Sciatic nerve (tissue), 2 donors: ENCODE measurements at regions of chr10 and their contacts with region 1.

Region 1: DNA sequence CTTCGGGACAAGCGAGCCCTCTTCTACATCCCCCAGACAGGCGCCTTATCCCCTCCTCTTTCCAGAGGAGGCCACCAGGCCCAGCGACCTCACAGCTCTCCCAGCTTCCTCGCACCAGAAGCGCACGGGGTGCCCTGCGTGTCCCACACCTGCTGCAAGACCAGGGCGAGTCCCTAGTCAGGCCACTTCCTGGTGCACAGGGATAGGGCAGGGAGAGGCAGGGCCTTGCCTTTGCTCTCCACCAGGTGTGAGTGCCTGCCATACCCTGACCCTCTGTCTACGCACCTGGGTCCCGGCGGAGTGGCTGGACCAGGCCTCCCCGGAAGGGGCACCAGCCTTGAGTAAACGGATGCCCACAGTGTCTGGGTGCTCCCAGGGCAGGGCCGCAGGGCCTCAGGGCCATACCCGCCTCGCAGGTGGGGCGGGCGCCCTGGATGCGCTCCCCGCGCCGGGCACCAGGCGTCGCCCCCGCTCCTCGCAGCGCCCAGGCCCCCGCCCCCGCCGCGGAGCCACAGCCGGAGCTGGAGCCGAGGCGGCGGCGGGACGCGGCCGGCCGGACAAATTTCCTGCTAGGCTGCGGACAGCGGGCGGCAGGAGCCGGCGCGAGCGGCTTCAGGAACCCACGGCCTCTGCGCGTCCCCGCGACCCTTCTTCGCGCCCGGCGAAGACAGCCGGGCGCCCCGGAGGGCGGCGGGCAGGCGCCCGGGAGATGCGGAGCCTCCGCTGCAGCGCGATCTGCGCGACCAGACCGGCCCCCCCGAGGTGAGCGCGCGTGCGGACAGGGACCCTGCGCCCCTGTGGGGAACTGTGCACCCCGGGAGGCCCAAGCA is at the start of gene PTPRE:
- DNase-seq: peak; percentile 85
- ATAC-seq: peak; percentile 88
- total RNA-seq, gene PTPRE: 53.0 TPM

Region 2: GRCh38 chr10:127374901-127375300 is 531.9 kb before region 1 on chr10:
- intact Hi-C with region 1: no loop called
- DNase-seq: no peak
- ATAC-seq: no peak

Region 3: DNA sequence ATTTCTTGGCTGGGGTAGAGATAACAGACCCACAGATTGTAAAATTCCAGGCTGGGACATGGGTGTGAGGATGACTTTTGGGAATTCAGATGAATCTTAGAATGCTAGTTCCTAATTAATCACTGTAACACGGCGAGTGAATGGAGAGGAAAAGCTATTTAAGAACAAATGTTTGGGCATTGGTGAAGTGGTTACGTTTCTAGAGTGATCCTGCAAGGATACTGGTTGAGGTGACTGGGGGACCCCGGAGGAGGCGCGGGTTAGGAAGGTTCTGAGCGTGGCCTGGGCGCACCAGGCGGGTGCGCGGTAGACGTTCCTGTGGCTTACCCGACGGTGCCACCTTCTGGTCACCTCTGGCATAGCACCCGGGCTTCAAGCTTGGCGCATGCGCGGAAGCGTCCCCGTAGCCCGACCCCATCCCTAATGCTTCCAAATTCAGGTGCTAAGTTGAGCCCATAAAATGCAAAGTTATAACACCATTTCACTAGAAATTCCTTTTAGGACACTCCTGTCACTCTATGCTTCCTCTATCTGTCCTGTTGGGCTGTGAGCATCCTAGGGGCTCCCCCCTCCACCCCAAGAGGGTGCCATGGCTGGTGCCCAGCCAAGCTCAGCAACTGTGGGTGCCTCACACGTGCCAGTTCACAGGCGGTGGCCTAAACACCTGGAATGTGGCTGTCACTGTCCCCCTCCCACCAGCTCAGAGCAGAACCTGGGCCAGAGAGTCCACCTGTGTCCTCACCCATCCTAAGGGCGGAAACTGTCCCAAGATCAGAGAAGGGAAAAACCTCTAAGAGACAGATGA is 104.6 kb after region 1 on chr10:
- intact Hi-C with region 1: loop called (anchors 2 kb)
- DNase-seq: peak; percentile 93
- ATAC-seq: peak; percentile 92